ENCODE measurements at regions of chr6 and their contacts with region 1.

Region 1: GRCh38 chr6:140043336-140043735 is 668.9 kb upstream of the CITED2 start:
- DNase-seq: peak; percentile 90
- H3K4me3 Mint-ChIP-seq: no peak overlapping the region
- H3K27ac Mint-ChIP-seq: peak overlapping the region; percentile 21
- H3K4me1 Mint-ChIP-seq: peaks cover 43% of the 10 kb centered on the region
- H3K27me3 Mint-ChIP-seq: no peaks in the 10 kb centered on the region
- CTCF ChIP-seq: no peak

Region 2: GRCh38 chr6:139764498-139764986 is 278.8 kb before region 1 on chr6:
- CTCF ChIA-PET with region 1: interaction called, 3 read pairs
- POLR2A ChIA-PET with region 1: interaction called, 6 read pairs
- intact Hi-C with region 1: loop called (anchors 10 kb)
- DNase-seq: peak; percentile 86
- H3K4me3 Mint-ChIP-seq: peak overlapping the region; percentile 14
- H3K27ac Mint-ChIP-seq: peak overlapping the region; percentile 88
- H3K4me1 Mint-ChIP-seq: peaks cover 37% of the 10 kb centered on the region
- H3K27me3 Mint-ChIP-seq: no peaks in the 10 kb centered on the region
- CTCF ChIP-seq: no peak

Region 3: DNA sequence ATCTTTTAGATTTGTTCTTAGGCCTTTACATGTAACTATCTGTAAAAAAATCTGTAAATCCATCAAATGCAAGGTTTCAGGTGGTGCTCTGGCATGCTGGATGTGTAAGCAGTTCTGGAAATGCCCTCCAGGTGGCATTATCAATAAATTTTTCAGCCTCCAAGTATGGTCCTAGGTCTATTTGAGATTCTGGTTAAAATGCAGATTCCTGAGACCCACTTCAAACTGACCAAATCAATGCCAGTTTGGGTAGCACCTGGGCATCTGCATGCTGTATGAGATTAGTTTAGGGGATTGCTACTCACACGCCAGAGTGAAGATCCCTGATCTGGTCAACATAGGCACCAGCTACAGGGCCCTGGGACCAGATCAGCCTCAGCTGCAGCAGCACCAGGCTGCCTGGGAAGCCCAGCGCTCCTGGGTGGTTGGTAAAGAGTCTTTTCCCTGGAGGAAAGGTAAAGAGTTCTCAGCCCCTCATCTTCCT is 161.6 kb before region 1 on chr6:
- CTCF ChIA-PET with region 1: interaction called, 3 read pairs
- POLR2A ChIA-PET with region 1: interaction called, 4 read pairs
- intact Hi-C with region 1: loop called (anchors 5 kb)
- DNase-seq: peak; percentile 51
- H3K4me3 Mint-ChIP-seq: no peak overlapping the region
- H3K27ac Mint-ChIP-seq: no peak overlapping the region
- H3K4me1 Mint-ChIP-seq: peaks cover 5% of the 10 kb centered on the region
- H3K27me3 Mint-ChIP-seq: no peaks in the 10 kb centered on the region
- CTCF ChIP-seq: peak; percentile 46

Region 4: GRCh38 chr6:139981768-139982181 is 61.6 kb before region 1 on chr6:
- CTCF ChIA-PET with region 1: interaction called, 3 read pairs
- POLR2A ChIA-PET with region 1: interaction called, 16 read pairs
- intact Hi-C with region 1: loop called (anchors 5 kb)
- DNase-seq: peak; percentile 57
- H3K4me3 Mint-ChIP-seq: peak overlapping the region; percentile 3
- H3K27ac Mint-ChIP-seq: peak overlapping the region; percentile 98
- H3K4me1 Mint-ChIP-seq: peaks cover 65% of the 10 kb centered on the region
- H3K27me3 Mint-ChIP-seq: no peaks in the 10 kb centered on the region
- CTCF ChIP-seq: no peak

Region 5: DNA sequence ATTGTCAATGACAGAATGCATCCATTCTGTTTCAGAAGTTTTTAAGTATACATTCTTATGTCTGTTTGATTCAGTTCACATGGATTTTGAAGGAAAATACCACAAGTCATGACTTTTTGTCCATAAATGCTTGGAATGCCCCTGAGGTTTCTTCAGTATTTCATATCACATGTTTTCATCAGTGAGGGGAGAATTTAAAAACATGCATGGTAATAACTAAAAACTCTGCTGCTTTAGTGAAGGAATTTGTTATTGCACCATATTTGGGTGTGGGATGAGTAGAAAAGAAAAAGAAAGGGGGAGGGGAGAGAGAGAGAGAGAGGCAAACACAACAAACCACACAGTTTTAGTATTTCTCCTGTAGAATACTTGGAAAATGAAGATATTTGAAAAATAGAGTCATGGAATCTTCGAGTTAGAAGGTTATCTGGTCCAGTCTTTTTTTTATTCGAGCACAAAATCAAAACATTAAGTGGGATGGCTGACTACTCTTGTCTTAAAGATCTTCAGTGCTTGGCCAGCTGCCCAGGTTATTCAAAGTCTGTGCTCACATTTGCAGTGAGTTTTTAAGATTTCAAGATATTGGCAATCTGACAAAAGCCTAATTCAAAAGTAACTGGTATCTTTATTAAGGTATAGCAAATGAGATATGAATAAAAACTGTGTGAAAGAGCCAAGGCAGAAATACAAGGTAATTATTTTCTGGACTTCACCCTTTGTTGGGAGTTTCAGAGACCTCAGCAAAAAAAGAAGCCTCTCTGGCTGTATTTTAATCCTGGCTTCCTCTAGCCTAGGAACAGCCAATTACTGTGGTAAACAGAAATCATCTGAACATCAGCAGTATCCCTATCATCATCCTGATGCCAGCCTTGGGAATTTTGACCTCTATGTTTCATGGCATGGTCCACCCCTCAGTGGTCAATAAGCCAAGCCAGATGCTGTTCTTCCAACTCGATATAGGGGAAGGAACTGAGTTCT is 19.0 kb after region 1 on chr6:
- CTCF ChIA-PET with region 1: interaction called, 4 read pairs
- POLR2A ChIA-PET with region 1: interaction called, 17 read pairs
- intact Hi-C with region 1: no loop called
- DNase-seq: peak; percentile 89
- H3K4me3 Mint-ChIP-seq: peak overlapping the region; percentile 59
- H3K27ac Mint-ChIP-seq: peak overlapping the region; percentile 85
- H3K4me1 Mint-ChIP-seq: peaks cover 41% of the 10 kb centered on the region
- H3K27me3 Mint-ChIP-seq: no peaks in the 10 kb centered on the region
- CTCF ChIP-seq: no peak

Region 6: DNA sequence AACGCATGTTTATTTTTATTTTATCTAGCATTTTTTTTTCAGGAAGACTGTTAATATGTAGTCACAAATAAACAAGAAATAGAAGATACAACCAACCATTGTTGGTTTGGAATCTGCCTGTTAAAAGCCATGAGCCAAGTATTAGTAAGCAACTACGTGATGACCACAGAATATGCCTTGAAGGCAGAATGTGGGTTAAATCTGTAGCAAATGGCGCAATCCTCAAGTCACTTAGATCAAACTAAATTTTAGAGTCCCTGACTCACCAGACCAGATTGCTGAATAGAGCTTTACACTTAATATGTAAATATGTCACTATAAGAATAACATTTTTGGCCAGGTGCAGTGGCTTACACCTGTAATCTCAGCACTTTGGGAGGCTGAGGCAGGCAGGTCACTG is 131.2 kb after region 1 on chr6:
- CTCF ChIA-PET with region 1: no interaction called
- POLR2A ChIA-PET with region 1: no interaction called
- intact Hi-C with region 1: loop called (anchors 5 kb)
- DNase-seq: peak; percentile 96
- H3K4me3 Mint-ChIP-seq: no peak overlapping the region
- H3K27ac Mint-ChIP-seq: peak overlapping the region; percentile 27
- H3K4me1 Mint-ChIP-seq: peaks cover 21% of the 10 kb centered on the region
- H3K27me3 Mint-ChIP-seq: no peaks in the 10 kb centered on the region
- CTCF ChIP-seq: no peak